ENCODE measurements at regions of chr14 and their contacts with region 1.

Region 1: DNA sequence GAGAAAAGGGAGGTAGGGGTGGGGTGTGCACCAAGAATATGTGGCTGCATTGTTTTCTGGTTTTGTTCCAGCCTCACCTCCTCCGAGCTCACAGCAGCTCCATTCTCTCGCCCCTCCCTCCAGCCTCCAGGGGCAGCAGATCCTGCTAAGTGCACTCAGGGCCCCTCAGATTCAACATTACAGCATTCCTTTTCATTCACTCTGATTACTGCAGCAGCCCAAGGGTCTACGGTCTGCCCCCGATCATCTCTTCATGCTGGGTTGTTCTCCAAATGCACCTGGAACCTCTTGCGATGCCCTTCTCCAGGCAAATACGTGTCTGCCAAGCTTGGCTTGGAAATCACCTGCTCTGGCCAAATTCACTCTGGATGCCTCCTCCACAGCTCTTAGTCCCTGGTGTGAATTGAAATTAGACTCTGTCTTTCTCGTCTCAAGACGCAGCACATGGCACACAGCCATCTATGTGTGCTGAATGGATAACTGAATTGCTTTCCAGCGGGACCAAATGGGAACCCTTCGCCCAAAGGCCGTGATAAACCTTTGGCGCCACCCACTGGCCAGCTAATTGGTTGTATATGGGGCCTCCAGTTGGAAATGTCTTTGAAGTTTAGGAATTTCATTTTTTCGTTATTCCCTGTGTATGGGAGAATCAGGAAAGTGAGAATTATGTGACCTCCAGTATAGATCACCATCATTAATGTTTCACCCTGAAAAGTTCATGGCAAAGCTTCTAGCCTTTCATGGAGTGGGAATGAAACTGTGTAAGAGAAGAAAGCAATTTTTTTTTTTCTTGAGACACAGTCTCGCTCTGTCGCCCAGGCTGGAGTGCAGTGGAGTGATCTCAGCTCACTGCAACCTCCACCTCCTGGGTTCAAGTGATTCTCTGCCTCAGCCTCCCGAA is 9.6 kb upstream of the HSP90AA1 start:
- DNase-seq: peak; percentile 90 to 95
- ATAC-seq: peak; percentile 86
- H3K4me3 ChIP-seq: no peak overlapping the region
- H3K27ac ChIP-seq: no peak overlapping the region
- H3K4me1 ChIP-seq: no peaks in the 10 kb centered on the region
- H3K27me3 ChIP-seq: no peaks in the 10 kb centered on the region

Region 2: DNA sequence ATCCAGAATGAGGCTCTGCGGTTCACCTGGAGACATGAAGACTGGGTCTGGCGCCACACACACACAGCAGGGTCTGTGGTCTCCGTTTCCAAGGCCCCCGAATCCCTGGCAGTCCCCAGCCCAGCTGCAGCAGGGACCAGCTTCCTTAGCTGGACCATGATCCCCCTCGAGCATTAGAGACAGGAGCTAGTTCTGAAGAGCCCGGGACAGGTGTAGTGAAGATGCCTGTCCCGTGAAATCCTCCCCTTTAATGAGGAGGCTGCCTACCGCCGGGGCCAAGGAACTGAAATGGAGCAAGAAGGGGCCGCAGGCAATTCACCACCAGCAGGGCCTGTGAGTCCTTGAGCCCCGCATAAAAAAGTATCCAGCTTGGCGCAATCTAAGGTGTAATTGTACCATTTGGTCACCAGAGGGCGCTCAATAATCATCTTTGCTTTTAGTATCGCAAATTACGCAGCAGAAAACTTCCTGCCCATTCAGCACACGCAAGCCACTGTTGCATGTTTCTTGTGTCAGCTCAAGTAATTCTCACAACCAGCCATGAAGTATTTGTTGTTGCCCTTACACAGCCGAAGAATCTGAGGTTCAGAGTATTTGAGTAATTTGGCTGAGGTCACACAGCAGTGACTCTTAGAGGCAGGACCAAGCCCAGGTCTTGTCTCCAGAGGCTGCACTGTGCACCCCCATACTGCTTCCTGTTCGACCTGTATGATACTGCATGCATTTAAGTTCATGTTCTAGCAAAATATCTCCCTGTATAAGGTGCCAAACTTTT is 389.2 kb before region 1 on chr14:
- intact Hi-C with region 1: loop called in 1 of 2 experiments (anchors 10 kb)
- DNase-seq: peak in 1 of 2 donors; percentile 61
- ATAC-seq: peak; percentile 87
- H3K4me3 ChIP-seq: no peak overlapping the region
- H3K27ac ChIP-seq: no peak overlapping the region
- H3K4me1 ChIP-seq: no peaks in the 10 kb centered on the region
- H3K27me3 ChIP-seq: no peaks in the 10 kb centered on the region

Region 3: GRCh38 chr14:102046343-102047278 is 49.9 kb before region 1 on chr14:
- intact Hi-C with region 1: loop called (anchors 5 kb)
- DNase-seq: peak; percentile 92 to 93
- ATAC-seq: peak; percentile 84
- H3K4me3 ChIP-seq: no peak overlapping the region
- H3K27ac ChIP-seq: no peak overlapping the region
- H3K4me1 ChIP-seq: no peaks in the 10 kb centered on the region
- H3K27me3 ChIP-seq: no peaks in the 10 kb centered on the region

Region 4: DNA sequence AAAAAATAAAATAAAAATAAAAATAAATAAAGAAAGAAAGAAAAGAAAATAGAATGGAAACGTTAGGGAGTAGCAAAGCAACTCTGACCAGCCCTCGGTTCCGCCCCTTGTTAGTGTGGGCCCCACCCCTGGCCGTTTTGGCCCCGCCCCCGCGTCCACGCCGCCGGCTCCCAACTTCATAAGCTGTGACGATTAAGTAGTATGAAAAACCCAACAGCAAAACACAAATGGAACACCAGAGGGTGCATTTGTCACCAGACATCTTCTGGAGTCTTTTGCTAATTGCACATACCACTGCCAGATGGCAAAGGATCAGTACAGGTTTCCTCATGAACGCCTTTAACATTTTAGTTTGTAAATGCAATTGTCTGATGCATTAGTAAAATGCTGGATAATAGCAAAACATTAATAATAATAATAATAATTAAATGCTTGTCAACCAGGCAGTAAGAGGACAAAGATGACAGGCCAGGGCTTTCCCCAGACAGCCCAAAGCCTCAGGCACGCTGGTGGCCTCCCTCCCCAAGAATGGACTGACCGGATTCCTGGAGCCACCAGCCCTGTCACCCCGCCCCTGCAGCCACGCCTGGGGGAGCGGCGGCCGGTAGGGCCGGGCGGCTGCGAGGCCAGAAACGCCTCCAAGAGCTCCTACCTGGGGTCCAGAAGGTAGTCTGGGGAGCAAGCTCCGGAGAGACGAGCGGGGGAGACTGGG is 33.2 kb before region 1 on chr14:
- intact Hi-C with region 1: loop called in 1 of 2 experiments (anchors 1 kb)
- DNase-seq: peak; percentile 91 to 95
- ATAC-seq: peak; percentile 90
- H3K4me3 ChIP-seq: no peak overlapping the region
- H3K27ac ChIP-seq: no peak overlapping the region
- H3K4me1 ChIP-seq: no peaks in the 10 kb centered on the region
- H3K27me3 ChIP-seq: no peaks in the 10 kb centered on the region

Region 5: GRCh38 chr14:102187058-102187457 is 90.6 kb after region 1 on chr14:
- intact Hi-C with region 1: no loop called
- DNase-seq: no peak
- ATAC-seq: peak; percentile 47
- H3K4me3 ChIP-seq: no peak overlapping the region
- H3K27ac ChIP-seq: no peak overlapping the region
- H3K4me1 ChIP-seq: peaks cover 0 to 2% of the 10 kb centered on the region in 2 donors
- H3K27me3 ChIP-seq: no peaks in the 10 kb centered on the region

Region 6: GRCh38 chr14:102351026-102351425 is 254.6 kb after region 1 on chr14:
- intact Hi-C with region 1: no loop called
- DNase-seq: no peak
- ATAC-seq: no peak
- H3K4me3 ChIP-seq: no peak overlapping the region
- H3K27ac ChIP-seq: no peak overlapping the region
- H3K4me1 ChIP-seq: no peaks in the 10 kb centered on the region
- H3K27me3 ChIP-seq: no peaks in the 10 kb centered on the region

Region 7: DNA sequence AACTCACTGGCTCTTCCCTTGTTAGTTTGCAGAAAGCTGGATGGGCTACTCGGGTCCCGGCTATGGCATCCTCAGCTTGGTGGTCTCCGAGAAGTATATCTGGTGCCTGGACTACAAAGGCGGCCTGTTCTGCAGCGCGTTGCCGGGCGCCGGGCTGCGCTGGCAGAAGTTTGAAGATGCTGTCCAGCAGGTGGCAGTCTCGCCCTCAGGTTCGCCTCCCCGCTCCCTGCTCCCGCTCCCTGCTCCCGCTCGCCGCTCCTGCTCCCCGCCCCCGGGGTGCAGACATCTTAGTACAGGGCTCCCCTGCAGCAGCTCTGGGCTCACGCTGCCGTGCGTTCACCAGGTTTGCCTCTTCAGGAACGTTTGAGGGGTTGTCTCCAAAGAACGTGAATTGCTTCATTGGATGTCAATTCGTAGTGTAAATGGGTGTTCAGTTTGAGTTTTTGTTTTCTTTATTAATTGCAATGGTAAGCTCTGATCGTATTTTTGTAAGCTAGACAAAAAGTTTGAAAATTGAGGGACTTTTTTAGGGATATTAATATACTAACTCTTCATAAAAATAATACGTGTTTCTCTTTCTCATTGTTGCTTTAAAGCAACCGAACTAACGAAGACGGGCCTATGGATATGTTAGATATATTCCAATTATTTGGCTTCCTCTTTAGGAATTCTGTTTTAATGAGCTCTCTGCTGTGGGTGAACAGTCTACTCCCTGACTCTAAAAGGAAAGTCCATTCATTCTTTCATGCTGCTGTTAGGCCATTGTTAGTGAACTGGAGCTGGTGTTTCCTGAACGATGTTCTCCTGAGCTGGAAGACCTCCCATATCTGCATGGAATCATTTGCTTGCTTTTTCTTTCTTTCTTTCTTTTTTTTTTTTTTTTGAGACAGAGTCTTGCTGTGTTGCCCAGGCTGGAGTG is 341.8 kb after region 1 on chr14:
- intact Hi-C with region 1: no loop called
- DNase-seq: peak; percentile 92 to 96
- ATAC-seq: peak; percentile 96
- H3K4me3 ChIP-seq: peak overlapping the region in 1 of 2 donors; percentile 22
- H3K27ac ChIP-seq: no peak overlapping the region
- H3K4me1 ChIP-seq: no peaks in the 10 kb centered on the region
- H3K27me3 ChIP-seq: no peaks in the 10 kb centered on the region